ENCODE measurements at regions of chr7 and their contacts with region 1.

Region 1: DNA sequence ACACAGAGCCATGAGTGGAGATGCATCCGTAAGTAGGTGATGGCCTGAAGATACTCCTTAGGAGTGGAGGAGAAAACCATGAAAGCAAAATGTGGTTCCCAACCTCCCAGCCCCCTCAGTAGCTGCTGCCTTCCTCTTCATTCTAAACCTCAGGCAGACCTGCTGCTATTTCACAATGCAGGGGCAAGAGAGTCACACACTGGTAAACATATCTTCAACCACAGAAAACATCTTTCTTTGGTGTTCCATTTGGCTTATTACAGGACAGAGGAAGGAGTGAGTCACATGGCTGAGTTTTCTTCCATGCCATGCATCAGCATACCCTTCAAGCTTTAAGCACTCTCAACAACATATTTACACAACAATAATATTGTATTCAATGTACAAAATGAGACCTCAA is 342.1 kb downstream of the BMPER start:
- DNase-seq: no peak
- CTCF ChIP-seq: no peak

Region 2: DNA sequence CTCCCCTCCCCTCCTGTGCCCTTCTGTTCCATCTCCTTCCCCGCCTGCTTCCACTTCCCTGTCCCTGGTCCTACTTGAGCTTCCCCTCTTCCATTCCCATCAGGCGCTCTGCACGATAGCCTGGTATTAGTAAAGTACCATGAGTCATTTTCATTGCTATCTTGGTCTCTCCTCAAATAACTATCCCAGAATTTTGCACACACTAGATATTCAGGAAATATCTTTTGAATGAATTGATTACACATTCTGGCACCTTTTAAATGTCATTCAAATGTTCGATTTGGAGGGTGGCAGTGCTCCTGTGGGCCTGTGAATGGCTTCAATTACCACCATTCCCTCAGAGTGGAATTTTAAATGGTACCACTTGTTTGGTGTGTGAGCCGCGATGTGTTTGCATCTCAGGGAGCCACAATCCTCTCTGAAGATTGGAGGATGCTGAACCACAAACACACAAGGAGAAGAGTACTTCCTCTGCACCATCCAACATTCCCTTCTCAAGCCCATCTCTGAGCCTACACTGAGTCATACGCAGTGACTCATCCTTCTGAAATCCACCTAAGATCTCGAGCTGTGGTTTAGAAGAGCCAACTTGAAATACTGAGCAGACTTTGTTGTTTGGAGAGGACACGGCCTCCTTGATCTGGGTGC is 260.4 kb before region 1 on chr7:
- CTCF ChIA-PET with region 1: no interaction called
- POLR2A ChIA-PET with region 1: no interaction called
- DNase-seq: no peak
- CTCF ChIP-seq: no peak

Region 3: GRCh38 chr7:34190299-34190698 is 57.2 kb before region 1 on chr7:
- CTCF ChIA-PET with region 1: no interaction called
- POLR2A ChIA-PET with region 1: no interaction called
- DNase-seq: no peak
- CTCF ChIP-seq: no peak

Region 4: DNA sequence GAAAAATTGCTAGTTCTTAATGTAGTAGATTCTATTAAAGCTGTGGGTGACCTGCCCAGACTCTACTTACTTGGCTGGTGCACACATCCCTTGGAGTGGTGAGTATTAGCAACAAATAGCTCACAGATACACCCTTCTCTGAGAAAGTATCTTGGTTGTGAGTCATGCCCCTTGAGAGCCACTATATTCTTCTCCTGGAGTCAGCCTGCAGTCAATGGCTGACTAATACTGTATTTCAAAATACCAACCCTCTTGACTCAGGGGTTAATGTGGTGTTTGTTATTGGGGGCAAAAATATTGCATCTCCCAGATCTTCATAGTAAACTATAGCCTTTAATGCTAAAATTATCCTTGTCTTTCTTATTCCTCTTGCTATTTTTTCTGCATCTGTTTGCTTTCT is 12.8 kb after region 1 on chr7:
- CTCF ChIA-PET with region 1: interaction called, 11 read pairs
- POLR2A ChIA-PET with region 1: no interaction called
- DNase-seq: no peak
- CTCF ChIP-seq: no peak

Region 5: GRCh38 chr7:34539003-34539402 is 291.5 kb after region 1 on chr7:
- CTCF ChIA-PET with region 1: no interaction called
- POLR2A ChIA-PET with region 1: no interaction called
- DNase-seq: no peak
- CTCF ChIP-seq: no peak